ENCODE measurements at regions of chr18 and their contacts with region 1.

Region 1: DNA sequence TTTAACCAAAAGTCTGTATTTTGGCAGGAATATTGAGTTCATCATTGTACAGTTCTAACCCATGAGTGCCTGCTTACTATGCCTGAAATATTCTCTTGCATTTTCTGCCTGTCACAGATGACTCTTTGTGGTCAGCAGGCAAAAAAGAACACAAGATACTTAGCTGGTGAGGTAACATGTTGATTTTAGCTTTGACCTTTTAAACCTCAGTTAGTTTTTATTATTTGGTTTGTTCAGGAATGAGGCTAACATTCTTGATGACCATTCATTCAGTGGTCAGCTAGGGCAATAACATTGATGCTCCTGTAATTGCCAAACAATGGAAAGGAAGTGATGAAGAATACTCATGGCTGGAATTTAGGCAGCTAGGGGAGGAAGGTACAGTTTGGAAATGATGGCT is 491.2 kb downstream of the PIK3C3 start:
- DNase-seq: peak; percentile 94
- ATAC-seq: peak; percentile 95
- H3K4me3 ChIP-seq: no peak overlapping the region
- H3K27ac ChIP-seq: peak overlapping the region; percentile 55
- H3K4me1 ChIP-seq: peaks cover 40% of the 10 kb centered on the region
- H3K27me3 ChIP-seq: no peaks in the 10 kb centered on the region
- CTCF ChIP-seq: no peak
- EP300 ChIP-seq: peak; percentile 62 to 78; a peak in 3 of 4 replicates
- POLR2A ChIP-seq: no peak
- RAD21 ChIP-seq: no peak

Region 2: DNA sequence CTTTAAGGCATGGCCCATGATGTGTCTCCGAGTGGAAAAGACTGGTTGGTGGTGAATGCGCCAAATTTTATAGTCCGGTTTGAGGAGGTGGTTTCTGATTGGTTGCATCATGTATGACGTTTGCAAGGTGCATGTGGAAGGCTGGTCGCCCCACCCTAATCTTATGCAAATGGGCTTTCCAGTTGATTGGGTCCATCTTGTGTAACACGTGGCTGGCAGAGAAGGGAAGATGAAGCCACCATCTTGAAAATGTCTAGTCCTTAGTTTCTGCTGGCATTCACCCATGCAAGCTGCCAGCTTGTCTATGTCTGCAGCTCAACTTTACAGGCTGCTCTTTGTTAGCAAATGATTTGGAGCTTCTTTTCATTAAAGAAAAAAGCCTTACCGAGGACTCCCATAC is 359.0 kb before region 1 on chr18:
- CTCF ChIA-PET with region 1: no interaction called
- POLR2A ChIA-PET with region 1: no interaction called
- in situ Hi-C with region 1: no loop called
- intact Hi-C with region 1: no loop called
- DNase-seq: no peak
- ATAC-seq: no peak
- H3K4me3 ChIP-seq: no peak overlapping the region
- H3K27ac ChIP-seq: no peak overlapping the region
- H3K4me1 ChIP-seq: no peaks in the 10 kb centered on the region
- H3K27me3 ChIP-seq: no peaks in the 10 kb centered on the region
- CTCF ChIP-seq: no peak
- EP300 ChIP-seq: no peak
- POLR2A ChIP-seq: no peak
- RAD21 ChIP-seq: no peak

Region 3: GRCh38 chr18:42131066-42131929 is 314.9 kb before region 1 on chr18:
- CTCF ChIA-PET with region 1: no interaction called
- POLR2A ChIA-PET with region 1: no interaction called
- in situ Hi-C with region 1: no loop called
- intact Hi-C with region 1: no loop called
- DNase-seq: no peak
- ATAC-seq: no peak
- H3K4me3 ChIP-seq: peak overlapping the region in 1 of 3 experiments; percentile 2; a peak in 1 of 6 replicates
- H3K27ac ChIP-seq: no peak overlapping the region
- H3K4me1 ChIP-seq: no peaks in the 10 kb centered on the region
- H3K27me3 ChIP-seq: no peaks in the 10 kb centered on the region
- CTCF ChIP-seq: no peak
- EP300 ChIP-seq: no peak
- POLR2A ChIP-seq: no peak
- RAD21 ChIP-seq: no peak

Region 4: GRCh38 chr18:42339372-42339771 is 106.8 kb before region 1 on chr18:
- CTCF ChIA-PET with region 1: no interaction called
- POLR2A ChIA-PET with region 1: no interaction called
- in situ Hi-C with region 1: no loop called
- intact Hi-C with region 1: loop called (anchors 1 kb)
- DNase-seq: peak; percentile 80
- ATAC-seq: peak; percentile 51
- H3K4me3 ChIP-seq: no peak overlapping the region
- H3K27ac ChIP-seq: peak overlapping the region; percentile 77
- H3K4me1 ChIP-seq: peaks cover 67% of the 10 kb centered on the region
- H3K27me3 ChIP-seq: no peaks in the 10 kb centered on the region
- CTCF ChIP-seq: no peak
- EP300 ChIP-seq: peak in 1 of 2 experiments; percentile 68; a peak in 2 of 4 replicates
- POLR2A ChIP-seq: no peak
- RAD21 ChIP-seq: no peak

Region 5: GRCh38 chr18:42373584-42373983 is 72.6 kb before region 1 on chr18:
- CTCF ChIA-PET with region 1: no interaction called
- POLR2A ChIA-PET with region 1: no interaction called
- in situ Hi-C with region 1: no loop called
- intact Hi-C with region 1: loop called (anchors 5 kb)
- DNase-seq: no peak
- ATAC-seq: no peak
- H3K4me3 ChIP-seq: no peak overlapping the region
- H3K27ac ChIP-seq: no peak overlapping the region
- H3K4me1 ChIP-seq: no peaks in the 10 kb centered on the region
- H3K27me3 ChIP-seq: no peaks in the 10 kb centered on the region
- CTCF ChIP-seq: no peak
- EP300 ChIP-seq: no peak
- POLR2A ChIP-seq: no peak
- RAD21 ChIP-seq: no peak

Region 6: GRCh38 chr18:42807887-42808286 is 361.7 kb after region 1 on chr18:
- CTCF ChIA-PET with region 1: no interaction called
- POLR2A ChIA-PET with region 1: no interaction called
- in situ Hi-C with region 1: no loop called
- intact Hi-C with region 1: no loop called
- DNase-seq: no peak
- ATAC-seq: no peak
- H3K4me3 ChIP-seq: no peak overlapping the region
- H3K27ac ChIP-seq: no peak overlapping the region
- H3K4me1 ChIP-seq: no peaks in the 10 kb centered on the region
- H3K27me3 ChIP-seq: no peaks in the 10 kb centered on the region
- CTCF ChIP-seq: no peak
- EP300 ChIP-seq: no peak
- POLR2A ChIP-seq: no peak
- RAD21 ChIP-seq: no peak